Right ventricle myocardium inferior (tissue), 1 donor: ENCODE measurements at regions of chr5 and their contacts with region 1.

Region 1: GRCh38 chr5:126422989-126423788 is at the start of gene GRAMD2B:
- DNase-seq: peak; percentile 90
- ATAC-seq: peak; percentile 96
- total RNA-seq, gene GRAMD2B: 29.3 TPM

Region 2: DNA sequence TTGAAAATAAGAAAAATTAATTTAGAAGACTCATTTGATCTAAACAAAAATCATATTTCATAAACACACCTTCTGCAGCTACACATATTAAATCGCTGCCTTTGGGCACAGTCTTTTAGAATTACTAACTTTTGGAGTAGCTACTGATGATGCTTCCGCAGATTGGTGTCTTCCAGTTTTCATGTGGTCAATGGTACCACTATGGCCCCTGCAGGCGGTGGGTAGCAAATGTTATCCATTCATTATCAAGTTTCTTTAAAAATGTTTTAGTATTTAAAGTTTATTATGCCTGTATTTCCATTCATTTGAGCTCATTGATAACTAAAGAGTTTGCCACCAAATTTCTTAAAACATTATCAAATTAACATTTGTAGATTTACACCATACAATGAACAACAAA is 122.9 kb before region 1 on chr5:
- intact Hi-C with region 1: no loop called
- DNase-seq: no peak
- ATAC-seq: no peak

Region 3: DNA sequence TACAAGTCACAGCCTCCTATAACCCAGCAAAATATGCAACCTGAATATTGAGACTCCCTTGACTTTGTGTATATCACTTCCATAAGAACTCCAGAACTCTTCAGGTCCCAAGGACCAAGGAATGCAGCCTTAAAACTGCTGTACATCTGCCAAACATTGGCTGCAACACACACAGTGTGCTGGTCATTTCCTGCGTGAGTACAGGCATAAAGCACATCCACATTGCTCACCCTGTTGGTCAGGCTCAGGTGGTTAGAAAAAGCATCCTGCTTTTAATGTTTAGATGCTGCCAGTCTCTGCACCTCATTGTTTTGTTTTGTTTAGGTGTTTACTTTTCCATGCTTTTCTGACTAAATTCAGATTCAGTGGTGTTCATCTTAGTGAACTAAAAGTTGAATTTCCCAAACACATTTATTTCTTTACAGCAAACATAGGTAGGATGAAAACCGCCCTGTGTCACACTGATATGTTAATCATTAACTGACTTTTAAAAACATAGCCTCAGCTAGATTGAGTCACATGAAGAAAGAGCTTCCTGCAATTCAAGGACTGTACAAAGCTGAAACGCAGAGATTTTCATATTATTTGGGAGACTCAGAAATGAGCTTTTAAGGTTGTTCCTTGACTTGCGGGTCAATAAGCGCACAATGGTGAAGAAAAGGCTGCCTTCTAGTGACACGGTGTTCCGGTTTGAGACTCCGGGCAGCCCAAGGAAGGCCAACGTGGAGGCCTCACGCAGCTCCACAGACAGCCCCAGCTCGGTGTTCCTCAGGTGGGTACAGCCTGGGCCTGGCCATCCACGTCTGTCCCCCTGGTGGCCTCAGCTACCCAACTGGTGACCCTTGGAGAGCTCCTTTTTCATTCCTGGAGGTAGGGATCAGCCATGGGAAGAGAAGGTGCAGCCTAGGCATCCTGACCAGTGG is 52.1 kb before region 1 on chr5:
- intact Hi-C with region 1: loop called (anchors 5 kb)
- DNase-seq: peak; percentile 45
- ATAC-seq: no peak

Region 4: DNA sequence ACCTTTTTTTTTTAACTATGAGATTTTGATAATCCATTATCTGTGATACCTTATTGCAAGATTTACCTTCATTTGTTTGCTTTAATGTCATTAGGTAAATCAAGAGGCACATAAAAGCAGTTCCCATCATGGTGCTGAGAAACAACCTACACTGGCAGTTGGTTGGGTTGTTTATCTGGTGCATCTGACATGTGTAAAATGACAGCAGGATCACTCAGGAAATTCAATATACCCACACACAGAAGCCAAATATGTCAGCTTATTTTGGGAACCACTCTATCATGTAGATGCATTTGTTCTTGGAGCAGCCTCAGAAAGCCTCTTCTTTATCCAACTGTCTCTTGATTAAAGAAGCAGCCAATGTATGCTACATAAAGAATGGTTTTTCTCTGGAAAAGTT is 1272.2 kb after region 1 on chr5:
- intact Hi-C with region 1: no loop called
- DNase-seq: no peak
- ATAC-seq: no peak